AG04450 (cell line): ENCODE measurements at regions of chr16 and their contacts with region 1.

Region 1: GRCh38 chr16:66618588-66619375 is 14.3 kb downstream of the CMTM3 start:
- DNase-seq: peak; percentile 81
- H3K4me3 ChIP-seq: no peak overlapping the region
- H3K27ac ChIP-seq: peak overlapping the region; percentile 88
- H3K27me3 ChIP-seq: no peaks in the 10 kb centered on the region
- CTCF ChIP-seq: no peak

Region 2: DNA sequence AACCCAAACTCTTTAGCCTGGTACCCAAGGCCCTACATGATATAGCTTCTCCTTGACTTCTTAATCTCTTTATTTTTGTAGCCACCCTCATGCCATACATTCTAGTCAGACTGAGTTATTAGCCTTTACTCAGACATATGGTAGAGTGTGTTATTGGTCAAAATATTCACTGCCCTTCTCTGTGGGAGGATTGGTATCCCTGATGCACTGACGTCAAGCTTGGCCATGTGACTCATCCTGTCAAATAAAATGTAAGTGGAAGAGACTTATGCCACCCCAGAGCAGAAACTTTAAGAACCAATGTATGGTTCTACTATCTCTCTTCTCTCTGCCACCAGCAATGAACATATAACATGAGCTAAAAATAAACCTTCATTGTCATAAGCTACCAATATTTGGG is 203.9 kb before region 1 on chr16:
- CTCF ChIA-PET with region 1: no interaction called
- POLR2A ChIA-PET with region 1: interaction called, 11 read pairs
- DNase-seq: no peak
- H3K4me3 ChIP-seq: no peak overlapping the region
- H3K27ac ChIP-seq: no peak overlapping the region
- H3K27me3 ChIP-seq: peaks cover 2% of the 10 kb centered on the region
- CTCF ChIP-seq: no peak